ENCODE measurements at regions of chr1 and their contacts with region 1.

Region 1: GRCh38 chr1:152459596-152460528 is 45.8 kb upstream of the CRNN start:
- DNase-seq: peak; percentile 82
- ATAC-seq: peak; percentile 93
- H3K4me3 Mint-ChIP-seq: peak overlapping the region; percentile 19
- H3K27ac Mint-ChIP-seq: peak overlapping the region; percentile 84
- H3K4me1 Mint-ChIP-seq: peaks cover 32% of the 10 kb centered on the region
- H3K27me3 Mint-ChIP-seq: peaks cover 2% of the 10 kb centered on the region

Region 2: GRCh38 chr1:152034646-152035405 is 425.0 kb before region 1 on chr1:
- CTCF ChIA-PET with region 1: interaction called, 18 read pairs
- POLR2A ChIA-PET with region 1: interaction called, 3 read pairs
- DNase-seq: peak; percentile 83
- ATAC-seq: peak; percentile 81
- H3K4me3 Mint-ChIP-seq: peak overlapping the region; percentile 98
- H3K27ac Mint-ChIP-seq: peak overlapping the region; percentile 98
- H3K4me1 Mint-ChIP-seq: peaks cover 43% of the 10 kb centered on the region
- H3K27me3 Mint-ChIP-seq: no peaks in the 10 kb centered on the region

Region 3: GRCh38 chr1:152167835-152168519 is 291.9 kb before region 1 on chr1:
- CTCF ChIA-PET with region 1: interaction called, 11 read pairs
- POLR2A ChIA-PET with region 1: no interaction called
- DNase-seq: no peak
- ATAC-seq: no peak
- H3K4me3 Mint-ChIP-seq: no peak overlapping the region
- H3K27ac Mint-ChIP-seq: no peak overlapping the region
- H3K4me1 Mint-ChIP-seq: peaks cover 11% of the 10 kb centered on the region
- H3K27me3 Mint-ChIP-seq: peaks cover 5% of the 10 kb centered on the region

Region 4: DNA sequence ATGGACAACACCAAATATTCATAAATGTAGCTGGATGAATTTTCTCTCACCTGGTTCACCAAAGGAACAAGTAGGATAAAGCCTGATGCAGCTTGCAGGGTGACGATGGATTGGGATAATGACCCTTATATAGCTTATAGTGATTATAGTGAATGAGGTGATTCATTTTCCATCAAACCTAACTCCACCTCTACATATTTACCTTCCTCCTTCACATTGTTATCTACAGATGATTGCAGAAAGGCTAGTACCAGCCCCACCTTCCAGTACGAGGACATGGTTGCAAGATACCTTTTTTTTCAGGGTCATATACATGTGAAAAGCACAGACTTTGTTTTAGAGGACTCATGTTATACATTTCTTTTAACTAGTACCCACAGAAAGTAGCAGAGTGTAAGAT is 100.0 kb before region 1 on chr1 and contains the start of gene FLG2:
- CTCF ChIA-PET with region 1: interaction called, 11 read pairs
- POLR2A ChIA-PET with region 1: no interaction called
- DNase-seq: no peak
- ATAC-seq: no peak
- H3K4me3 Mint-ChIP-seq: no peak within 1 kb of the TSS
- H3K27ac Mint-ChIP-seq: no peak within 1 kb of the TSS
- H3K4me1 Mint-ChIP-seq: no peaks in the 10 kb centered on the region
- H3K27me3 Mint-ChIP-seq: peaks cover 1% of the 10 kb centered on the region
- total RNA-seq, gene FLG2: not detected

Region 5: GRCh38 chr1:152440635-152441471 is 19.0 kb before region 1 on chr1:
- CTCF ChIA-PET with region 1: interaction called, 62 read pairs
- POLR2A ChIA-PET with region 1: no interaction called
- DNase-seq: peak; percentile 77
- ATAC-seq: peak; percentile 99
- H3K4me3 Mint-ChIP-seq: no peak overlapping the region
- H3K27ac Mint-ChIP-seq: no peak overlapping the region
- H3K4me1 Mint-ChIP-seq: no peaks in the 10 kb centered on the region
- H3K27me3 Mint-ChIP-seq: peaks cover 25% of the 10 kb centered on the region

Region 6: DNA sequence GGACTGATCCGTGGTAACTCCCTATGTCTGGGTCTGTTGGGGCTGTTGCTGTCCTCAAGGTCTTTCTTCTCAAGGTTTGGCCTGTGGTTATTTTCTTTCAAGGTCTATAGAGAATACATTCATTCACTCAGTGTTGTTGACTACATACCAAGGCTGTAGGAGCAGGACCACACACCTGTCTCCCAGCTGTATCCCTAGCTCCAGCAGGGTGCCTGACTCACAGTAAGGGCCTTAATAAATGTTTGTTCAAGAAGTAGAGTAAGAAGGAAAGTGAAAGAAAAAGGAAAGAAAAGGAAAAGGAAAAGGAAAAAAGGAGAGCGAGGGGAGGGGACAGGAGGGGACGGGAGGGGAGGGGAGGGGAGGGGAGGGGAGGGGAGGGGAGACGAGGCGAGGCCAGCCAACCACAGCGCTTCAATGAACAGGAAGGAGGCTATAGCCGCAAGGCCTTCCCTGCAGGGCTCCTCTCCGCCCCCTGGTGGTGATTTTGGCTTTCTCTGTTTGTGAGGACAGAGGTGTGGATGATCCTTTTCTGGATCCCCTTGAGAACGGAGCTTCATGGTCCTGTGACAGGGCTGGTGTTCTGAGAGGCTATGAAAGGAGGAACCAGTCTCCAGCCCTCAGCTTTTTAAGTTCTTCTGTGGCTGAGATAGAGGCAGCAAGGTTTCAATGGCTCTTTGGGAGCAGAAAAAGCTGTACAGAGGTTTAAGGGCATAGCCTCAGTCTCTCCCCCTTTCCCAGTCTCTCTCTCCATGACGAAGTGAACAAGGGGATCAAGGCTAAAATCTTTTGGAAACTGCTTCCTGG is 20.1 kb after region 1 on chr1:
- CTCF ChIA-PET with region 1: interaction called, 52 read pairs
- POLR2A ChIA-PET with region 1: no interaction called
- DNase-seq: peak; percentile 65
- ATAC-seq: no peak
- H3K4me3 Mint-ChIP-seq: no peak overlapping the region
- H3K27ac Mint-ChIP-seq: peak overlapping the region; percentile 53
- H3K4me1 Mint-ChIP-seq: peaks cover 8% of the 10 kb centered on the region
- H3K27me3 Mint-ChIP-seq: no peaks in the 10 kb centered on the region

Region 7: DNA sequence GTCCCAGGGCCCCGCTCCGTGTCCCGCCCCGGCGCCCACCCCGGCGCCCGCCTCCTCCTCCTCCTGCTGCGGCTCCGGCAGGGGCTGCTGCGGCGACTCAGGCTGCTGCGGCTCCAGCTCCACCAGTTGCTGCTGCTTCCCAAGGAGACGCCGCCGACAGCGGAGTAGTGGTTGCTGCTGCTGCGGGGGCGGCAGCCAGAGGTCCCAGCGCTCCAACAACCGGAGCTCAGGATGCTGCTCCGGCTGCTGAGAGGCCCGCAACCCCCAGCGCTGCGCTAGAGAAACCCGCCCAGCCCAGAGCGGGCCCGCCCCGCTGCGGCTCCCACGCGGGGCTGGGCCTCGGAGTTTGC is 55.5 kb after region 1 on chr1:
- CTCF ChIA-PET with region 1: no interaction called
- POLR2A ChIA-PET with region 1: no interaction called
- DNase-seq: no peak
- ATAC-seq: no peak
- H3K4me3 Mint-ChIP-seq: no peak overlapping the region
- H3K27ac Mint-ChIP-seq: no peak overlapping the region
- H3K4me1 Mint-ChIP-seq: no peaks in the 10 kb centered on the region
- H3K27me3 Mint-ChIP-seq: peaks cover 54% of the 10 kb centered on the region

Measured in activated CD8-positive, alpha-beta T cell treated with anti-CD3 and anti-CD28 coated beads, Interleukin-2, amount 10 ng/mL, durations not matched to agents 7 days and 5 days (primary cell).